Left lung (tissue), 14 donors: ENCODE measurements at regions of chr6 and their contacts with region 1.

Region 1: GRCh38 chr6:149934249-149935156 is 7.3 kb upstream of the ULBP2 start:
- DNase-seq: peak in 2 of 4 donors; percentile 58 to 74
- ATAC-seq: peak; percentile 85
- H3K4me3 ChIP-seq: no peak overlapping the region
- H3K27ac ChIP-seq: no peak overlapping the region
- H3K4me1 ChIP-seq: peaks cover 9 to 14% of the 10 kb centered on the region in 2 donors
- H3K27me3 ChIP-seq: peaks cover 55 to 97% of the 10 kb centered on the region in 2 donors
- CTCF ChIP-seq: peak; percentile 69 to 71

Region 2: DNA sequence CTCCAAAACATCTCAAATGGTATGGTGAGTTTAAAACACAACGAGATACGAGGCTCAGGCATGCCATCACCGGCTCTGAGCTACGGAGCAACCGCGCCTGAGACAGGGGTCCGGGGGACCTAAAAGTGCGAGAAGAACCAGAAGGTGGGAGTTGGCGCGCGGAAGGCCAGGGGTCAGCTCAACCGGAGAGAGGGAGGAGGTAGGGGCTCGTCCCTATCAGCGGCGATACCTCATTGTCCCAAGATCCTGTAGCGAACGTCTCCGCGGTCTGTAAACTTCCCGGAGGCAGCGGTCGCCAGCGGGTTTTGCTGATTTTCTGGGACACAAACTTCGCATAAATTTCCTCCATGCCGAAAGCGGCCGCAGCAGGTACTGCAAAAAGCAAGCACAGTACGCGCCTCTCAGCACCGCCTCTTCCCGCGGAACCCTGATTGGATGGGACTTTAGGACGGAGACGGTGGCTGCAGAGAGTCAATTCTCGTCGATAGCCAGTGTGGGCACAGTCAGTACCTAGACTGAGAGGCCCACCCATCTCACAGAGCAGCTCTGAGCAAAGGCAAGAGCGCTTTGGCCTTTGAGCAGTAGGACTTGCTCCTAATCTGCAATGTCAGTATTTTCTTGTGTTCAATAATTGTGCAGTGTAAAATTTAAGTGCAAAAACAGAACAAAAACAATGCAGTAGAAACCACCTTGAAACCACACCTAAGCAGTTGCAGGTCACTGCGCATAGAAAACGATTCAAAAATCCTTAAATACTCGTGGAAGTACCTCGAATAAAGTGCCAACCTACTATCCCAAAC is 188.2 kb before region 1 on chr6 and contains the start of gene NUP43:
- intact Hi-C with region 1: no loop called
- DNase-seq: peak; percentile 91 to 93 (median 92)
- ATAC-seq: peak; percentile 72
- H3K4me3 ChIP-seq: peak within 1 kb of the TSS; percentile 69 to 81
- H3K27ac ChIP-seq: peak within 1 kb of the TSS; percentile 65 to 73
- H3K4me1 ChIP-seq: peaks cover 5 to 37% of the 10 kb centered on the region in 2 donors
- H3K27me3 ChIP-seq: no peaks in the 10 kb centered on the region
- CTCF ChIP-seq: peak; percentile 53 to 92
- polyA plus RNA-seq, gene NUP43: 40.9 to 49.6 (median 47.6) TPM

Region 3: DNA sequence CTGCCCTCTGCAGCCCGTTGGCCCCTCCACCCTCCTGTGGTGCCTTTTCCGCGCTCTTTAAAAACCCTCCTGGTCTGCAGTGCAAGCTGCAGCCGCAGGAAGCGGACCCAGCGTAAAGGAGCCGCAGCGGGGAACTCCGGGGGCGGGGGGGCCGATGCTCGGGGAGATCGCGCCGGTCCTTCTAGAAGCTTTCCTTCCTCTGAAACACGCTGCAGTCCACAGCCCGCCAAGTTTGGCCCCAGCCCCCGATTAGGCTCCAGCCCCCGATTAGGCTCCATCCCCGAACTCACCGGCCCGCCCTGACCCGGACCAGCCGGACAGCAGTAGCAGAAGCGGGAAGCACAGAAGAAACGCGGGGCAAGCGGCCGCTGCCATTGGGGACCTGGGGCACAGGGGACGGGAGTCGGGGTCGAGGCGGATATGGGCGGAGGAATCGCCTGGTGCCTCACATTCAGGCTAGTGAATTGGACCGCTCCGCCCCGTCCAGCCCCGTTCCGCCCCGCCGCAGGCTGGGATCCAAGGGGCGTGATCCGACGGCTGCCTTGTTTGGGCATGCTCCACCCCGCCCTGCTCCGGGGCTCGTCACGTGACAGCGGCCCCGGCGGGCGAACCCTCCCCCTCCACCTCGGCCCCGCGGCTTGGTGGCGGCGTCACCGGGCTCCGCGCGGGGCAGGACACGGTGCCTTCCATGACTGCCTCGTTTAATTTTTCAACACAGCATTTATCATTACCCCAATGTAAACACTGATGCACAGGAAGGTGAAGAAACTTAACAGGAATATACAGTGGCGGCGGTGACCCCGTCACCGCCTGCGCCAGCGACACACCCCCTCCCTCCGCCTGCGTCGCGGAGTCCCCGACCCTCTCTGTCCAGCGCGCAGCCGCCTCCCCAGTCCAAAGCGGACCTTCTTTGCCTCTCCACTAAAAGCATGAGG is 70.5 kb after region 1 on chr6:
- intact Hi-C with region 1: loop called in 1 of 2 experiments (anchors 5 kb)
- DNase-seq: peak; percentile 92 to 97 (median 96)
- ATAC-seq: peak; percentile 98
- H3K4me3 ChIP-seq: peak overlapping the region; percentile 50 to 52
- H3K27ac ChIP-seq: peak overlapping the region in 1 of 2 donors; percentile 46
- H3K4me1 ChIP-seq: peaks cover 0 to 13% of the 10 kb centered on the region in 2 donors
- H3K27me3 ChIP-seq: peaks cover 0 to 78% of the 10 kb centered on the region in 2 donors
- CTCF ChIP-seq: no peak

Region 4: DNA sequence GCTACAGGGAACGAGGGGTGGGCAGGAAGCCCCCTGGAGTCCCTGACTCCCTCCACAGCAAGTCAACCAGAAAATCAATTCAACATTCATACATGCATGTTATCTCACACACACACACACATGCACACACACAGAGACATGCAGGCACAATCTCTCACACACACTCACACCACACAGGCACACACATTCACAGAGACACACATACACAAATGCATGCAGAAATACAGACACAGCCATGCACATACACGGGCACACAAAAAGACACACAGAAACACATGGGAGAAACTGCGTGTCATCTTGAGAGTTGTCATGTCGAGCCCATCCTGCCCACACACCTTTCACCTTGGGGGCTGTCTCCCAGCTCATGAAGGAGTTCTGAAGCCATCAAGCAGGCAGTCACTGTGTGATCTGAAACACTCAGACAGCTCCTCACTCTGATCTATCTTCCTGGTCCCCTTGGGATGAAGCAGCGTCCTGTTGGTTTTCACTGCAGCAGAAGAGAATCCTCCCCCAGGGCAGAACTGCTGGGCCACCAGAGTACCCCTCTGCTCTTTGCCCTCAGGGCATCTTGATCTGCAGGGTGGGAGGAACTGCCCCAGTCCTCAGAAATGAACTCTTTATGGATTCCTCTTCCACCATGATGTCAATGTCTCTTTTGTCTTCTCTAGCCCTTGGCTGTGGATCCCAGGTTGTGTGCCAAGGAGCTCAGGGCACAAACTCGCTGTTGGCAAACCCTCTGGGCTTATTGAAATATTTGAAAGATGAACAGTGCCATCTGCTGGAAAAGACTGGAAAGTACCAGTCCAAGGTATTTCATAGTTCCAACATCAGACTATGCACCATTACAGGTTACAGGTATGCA is 82.1 kb after region 1 on chr6:
- intact Hi-C with region 1: loop called in 1 of 2 experiments (anchors 5 kb)
- DNase-seq: peak in 2 of 4 donors; percentile 45 to 72
- ATAC-seq: peak; percentile 94
- H3K4me3 ChIP-seq: no peak overlapping the region
- H3K27ac ChIP-seq: no peak overlapping the region
- H3K4me1 ChIP-seq: no peaks in the 10 kb centered on the region
- H3K27me3 ChIP-seq: peaks cover 41 to 79% of the 10 kb centered on the region in 2 donors
- CTCF ChIP-seq: peak; percentile 60 to 69

Region 5: GRCh38 chr6:150079604-150080003 is 145.1 kb after region 1 on chr6:
- intact Hi-C with region 1: no loop called
- DNase-seq: no peak
- ATAC-seq: no peak
- H3K4me3 ChIP-seq: no peak overlapping the region
- H3K27ac ChIP-seq: no peak overlapping the region
- H3K4me1 ChIP-seq: no peaks in the 10 kb centered on the region
- H3K27me3 ChIP-seq: peaks cover 0 to 7% of the 10 kb centered on the region in 2 donors
- CTCF ChIP-seq: no peak